Activated T-helper 1 cell treated with anti-CD3 and anti-CD28 coated beads, Interleukin-12 subunit alpha, Interleukin-12 subunit beta, Interleukin-2, Interleukin-4 antibody, amounts not matched to agents 30 ng/mL and 10 ng/mL and 1 ng/mL, durations not matched to agents 14 hours and 24 hours and 36 hours (primary cell): ENCODE measurements at regions of chr18 and their contacts with region 1.

Region 1: DNA sequence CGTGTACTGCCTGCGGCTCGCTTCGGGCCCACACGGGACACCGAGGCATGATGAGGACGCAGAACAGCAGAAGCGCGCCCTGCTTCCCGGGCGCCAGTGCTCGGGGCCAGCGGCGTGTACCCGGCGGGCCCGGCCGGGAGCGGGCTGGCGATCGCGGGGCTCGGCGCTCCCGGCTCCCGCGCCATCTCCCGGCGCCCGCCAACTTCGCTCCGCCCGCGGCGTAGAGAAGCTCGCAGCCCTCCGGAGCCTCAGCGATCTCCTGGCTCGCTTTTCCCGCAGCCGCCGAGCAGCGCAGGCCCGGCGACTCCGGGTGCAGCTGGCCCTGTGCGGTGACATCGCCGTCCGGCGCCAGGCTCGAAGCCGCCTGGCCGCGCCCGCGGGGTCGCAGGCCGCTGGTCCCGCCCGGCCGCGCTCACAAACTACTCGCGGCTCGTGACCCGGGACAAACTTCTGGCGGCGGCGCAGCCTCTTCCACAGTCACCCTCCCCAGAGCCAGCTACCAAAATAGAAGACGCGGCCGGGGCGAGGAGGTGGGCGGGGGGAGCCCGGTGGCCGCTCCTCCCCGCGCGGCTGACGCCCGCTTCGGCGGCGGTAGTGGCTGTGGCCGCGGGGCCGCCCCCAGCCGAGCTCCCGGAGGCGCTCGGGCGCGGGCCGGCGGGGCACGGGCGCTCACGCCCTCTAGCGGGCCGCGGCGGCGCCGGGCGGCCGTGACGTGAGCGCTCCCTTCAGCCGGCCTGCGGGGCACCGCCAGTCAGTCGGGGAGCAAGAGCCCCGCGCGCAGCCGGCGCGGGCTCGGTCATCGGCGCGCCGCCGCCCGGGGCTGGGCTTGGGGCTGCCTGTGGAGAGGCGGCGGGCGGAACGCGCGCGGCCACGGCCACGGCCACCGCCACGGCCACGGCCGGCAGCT is at the start of gene PTPRM:
- DNase-seq: peak; percentile 46
- H3K4me3 Mint-ChIP-seq: peak within 1 kb of the TSS; percentile 15
- H3K27ac Mint-ChIP-seq: no peak within 1 kb of the TSS
- H3K4me1 Mint-ChIP-seq: no peaks in the 10 kb centered on the region
- H3K27me3 Mint-ChIP-seq: peaks cover 46% of the 10 kb centered on the region
- total RNA-seq, gene PTPRM: 10.4 and 10.7 TPM in 2 replicates

Region 2: DNA sequence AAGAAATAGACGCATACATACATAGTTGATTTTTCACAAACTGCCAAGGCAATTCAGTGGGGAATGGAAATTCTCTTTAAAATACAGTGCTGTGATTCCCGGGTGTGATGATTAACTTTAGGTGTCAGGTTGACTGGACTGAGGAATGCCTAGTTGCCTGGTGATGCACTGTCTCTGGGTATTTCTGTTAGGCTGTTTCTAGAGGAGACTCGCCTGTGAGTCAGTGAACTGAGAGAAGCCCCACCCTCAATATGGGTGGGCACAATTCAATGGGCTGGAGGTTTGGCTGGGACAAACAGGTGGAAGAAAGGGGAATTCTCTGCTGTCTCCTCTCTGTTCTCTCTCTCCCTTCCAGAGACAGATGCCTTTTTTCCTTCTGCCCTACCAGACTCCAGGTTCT is 649.7 kb before region 1 on chr18:
- intact Hi-C with region 1: loop called (anchors 10 kb)
- DNase-seq: no peak
- H3K4me3 Mint-ChIP-seq: no peak overlapping the region
- H3K27ac Mint-ChIP-seq: no peak overlapping the region
- H3K4me1 Mint-ChIP-seq: no peaks in the 10 kb centered on the region
- H3K27me3 Mint-ChIP-seq: no peaks in the 10 kb centered on the region

Region 3: DNA sequence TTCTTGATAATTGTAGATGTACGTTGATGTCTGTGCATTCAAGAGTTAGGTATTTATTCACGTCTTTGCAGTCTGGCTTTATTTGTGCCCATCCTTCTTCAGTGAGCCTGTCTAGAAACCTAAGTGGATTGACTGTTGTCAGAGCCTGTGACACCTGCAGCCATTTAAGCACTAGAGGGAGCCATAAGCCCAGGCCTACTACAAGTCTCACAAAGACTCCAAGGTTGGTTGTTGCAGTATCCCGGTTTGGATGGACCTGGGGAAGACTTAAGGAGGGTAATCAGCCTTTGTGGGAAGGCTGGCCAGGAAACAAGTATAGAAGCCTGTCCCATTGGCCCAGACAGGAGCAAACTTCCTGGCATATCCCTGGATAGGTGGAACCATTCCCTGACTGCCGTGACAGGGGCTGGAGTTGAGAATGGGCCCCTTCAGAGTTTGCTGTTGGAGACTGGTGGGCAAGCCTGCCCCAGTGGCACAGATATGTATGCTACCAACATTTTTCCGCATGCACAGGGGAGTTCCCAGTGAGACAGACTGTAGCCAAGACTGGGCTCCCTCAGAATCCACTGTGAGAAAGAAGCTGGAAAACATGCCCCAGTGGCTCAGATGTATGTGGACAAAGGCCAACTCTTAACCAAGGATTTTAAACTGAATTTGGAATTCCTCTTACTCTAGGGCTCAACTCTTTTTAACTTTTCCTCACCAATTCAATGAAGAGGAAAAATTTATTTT is 345.2 kb before region 1 on chr18:
- intact Hi-C with region 1: loop called (anchors 2 kb)
- DNase-seq: no peak
- H3K4me3 Mint-ChIP-seq: no peak overlapping the region
- H3K27ac Mint-ChIP-seq: no peak overlapping the region
- H3K4me1 Mint-ChIP-seq: no peaks in the 10 kb centered on the region
- H3K27me3 Mint-ChIP-seq: no peaks in the 10 kb centered on the region

Region 4: GRCh38 chr18:7577706-7578356 is 11.0 kb after region 1 on chr18:
- intact Hi-C with region 1: no loop called
- DNase-seq: no peak
- H3K4me3 Mint-ChIP-seq: no peak overlapping the region
- H3K27ac Mint-ChIP-seq: no peak overlapping the region
- H3K4me1 Mint-ChIP-seq: peaks cover 5% of the 10 kb centered on the region
- H3K27me3 Mint-ChIP-seq: peaks cover 4% of the 10 kb centered on the region

Region 5: GRCh38 chr18:7946734-7947377 is 380.0 kb after region 1 on chr18:
- intact Hi-C with region 1: loop called (anchors 10 kb)
- DNase-seq: peak; percentile 7
- H3K4me3 Mint-ChIP-seq: peak overlapping the region; percentile 85
- H3K27ac Mint-ChIP-seq: peak overlapping the region; percentile 57
- H3K4me1 Mint-ChIP-seq: peaks cover 12% of the 10 kb centered on the region
- H3K27me3 Mint-ChIP-seq: no peaks in the 10 kb centered on the region